ENCODE measurements at regions of chr15 and their contacts with region 1.

Region 1: DNA sequence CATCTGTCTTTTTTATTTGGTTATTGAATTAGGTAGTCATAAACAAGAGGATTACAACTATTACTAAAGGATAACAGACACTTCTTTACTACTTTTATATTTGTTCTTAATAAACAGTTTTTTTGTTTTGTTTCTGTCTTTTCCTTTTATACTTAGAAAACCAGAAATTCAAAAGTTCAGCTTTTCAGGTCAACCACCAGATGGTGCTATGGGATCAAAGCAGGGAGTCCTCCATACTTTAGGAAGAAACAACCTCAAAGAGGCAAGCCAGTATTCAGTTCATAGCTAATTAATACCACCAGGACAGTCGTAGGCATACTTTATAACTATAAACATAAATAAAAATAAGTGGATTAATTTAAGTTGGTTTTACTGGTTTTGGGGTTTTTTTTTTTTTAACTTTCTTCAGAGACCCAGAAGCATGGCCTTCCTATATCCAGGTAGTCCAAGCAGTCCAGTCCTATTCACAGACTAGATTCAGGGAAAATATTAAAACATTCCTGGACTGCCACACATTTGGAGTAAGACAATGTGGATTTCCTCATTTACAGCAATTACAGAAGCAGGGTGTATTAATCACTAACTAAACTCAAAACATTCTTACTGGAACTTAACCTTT is 16.0 kb upstream of the EID1 start:
- DNase-seq: no peak
- H3K4me3 ChIP-seq: no peak overlapping the region
- H3K27ac ChIP-seq: no peak overlapping the region
- H3K4me1 ChIP-seq: no peaks in the 10 kb centered on the region
- H3K27me3 ChIP-seq: no peaks in the 10 kb centered on the region
- CTCF ChIP-seq: peak; percentile 85 to 86

Region 2: GRCh38 chr15:49145651-49146609 is 284.0 kb after region 1 on chr15:
- intact Hi-C with region 1: loop called (anchors 10 kb)
- DNase-seq: no peak
- H3K4me3 ChIP-seq: no peak overlapping the region
- H3K27ac ChIP-seq: no peak overlapping the region
- H3K4me1 ChIP-seq: peaks cover 0 to 53% (median 8%) of the 10 kb centered on the region in 4 donors
- H3K27me3 ChIP-seq: no peaks in the 10 kb centered on the region
- CTCF ChIP-seq: peak; percentile 50 to 55

Region 3: GRCh38 chr15:49421991-49422390 is 560.1 kb after region 1 on chr15:
- intact Hi-C with region 1: loop called (anchors 10 kb)
- DNase-seq: peak; percentile 41 to 69
- H3K4me3 ChIP-seq: peak overlapping the region; percentile 25 to 32
- H3K27ac ChIP-seq: peak overlapping the region in 1 of 2 donors; percentile 13
- H3K4me1 ChIP-seq: peaks cover 0 to 6% (median 1%) of the 10 kb centered on the region in 4 donors
- H3K27me3 ChIP-seq: no peaks in the 10 kb centered on the region
- CTCF ChIP-seq: peak; percentile 80 to 83